Activated CD8-positive, alpha-beta T cell treated with anti-CD3 and anti-CD28 coated beads for 36 hours (primary cell): ENCODE measurements at regions of chr6 and their contacts with region 1.

Region 1: GRCh38 chr6:41941280-41942066 is at the start of gene CCND3:
- DNase-seq: peak; percentile 95
- ATAC-seq: peak; percentile 85
- H3K4me3 Mint-ChIP-seq: peak within 1 kb of the TSS; percentile 90
- H3K27ac Mint-ChIP-seq: peak within 1 kb of the TSS; percentile 91
- H3K4me1 Mint-ChIP-seq: peaks cover 51% of the 10 kb centered on the region
- H3K27me3 Mint-ChIP-seq: no peaks in the 10 kb centered on the region
- CTCF ChIP-seq: no peak
- total RNA-seq, gene CCND3: 457 to 459 TPM

Region 2: GRCh38 chr6:41901882-41902519 is 39.5 kb before region 1 on chr6:
- CTCF ChIA-PET with region 1: interaction called, 6 read pairs
- POLR2A ChIA-PET with region 1: no interaction called
- intact Hi-C with region 1: loop called (anchors 2 kb)
- DNase-seq: peak; percentile 71
- ATAC-seq: peak; percentile 68
- H3K4me3 Mint-ChIP-seq: no peak overlapping the region
- H3K27ac Mint-ChIP-seq: no peak overlapping the region
- H3K4me1 Mint-ChIP-seq: peaks cover 4% of the 10 kb centered on the region
- H3K27me3 Mint-ChIP-seq: no peaks in the 10 kb centered on the region
- CTCF ChIP-seq: peak; percentile 38

Region 3: DNA sequence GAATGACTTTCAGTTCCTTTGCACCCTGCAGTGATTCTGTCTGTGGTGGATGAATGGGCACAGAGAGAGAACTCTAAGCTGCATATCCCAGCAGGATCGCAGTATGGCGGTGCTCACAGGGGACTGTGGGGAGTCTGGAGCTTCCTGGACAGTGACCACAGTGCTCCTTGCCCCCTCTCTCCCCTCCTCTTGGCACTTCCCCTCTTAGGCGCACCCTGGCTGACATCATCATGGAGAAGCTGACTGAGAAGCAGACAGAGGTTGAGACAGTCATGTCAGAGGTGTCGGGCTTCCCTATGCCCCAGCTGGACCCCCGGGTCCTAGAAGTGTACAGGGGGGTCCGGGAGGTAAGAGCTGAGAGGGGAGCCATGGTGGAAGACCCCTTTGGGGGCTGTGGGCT is 11.5 kb before region 1 on chr6:
- CTCF ChIA-PET with region 1: interaction called, 115 read pairs
- POLR2A ChIA-PET with region 1: interaction called, 58 read pairs
- intact Hi-C with region 1: no loop called
- DNase-seq: no peak
- ATAC-seq: no peak
- H3K4me3 Mint-ChIP-seq: no peak overlapping the region
- H3K27ac Mint-ChIP-seq: peak overlapping the region; percentile 42
- H3K4me1 Mint-ChIP-seq: peaks cover 37% of the 10 kb centered on the region
- H3K27me3 Mint-ChIP-seq: no peaks in the 10 kb centered on the region
- CTCF ChIP-seq: no peak

Region 4: GRCh38 chr6:41966961-41967311 is 25.5 kb after region 1 on chr6:
- CTCF ChIA-PET with region 1: interaction called, 9 read pairs
- POLR2A ChIA-PET with region 1: interaction called, 10 read pairs
- intact Hi-C with region 1: no loop called
- DNase-seq: no peak
- ATAC-seq: no peak
- H3K4me3 Mint-ChIP-seq: no peak overlapping the region
- H3K27ac Mint-ChIP-seq: peak overlapping the region; percentile 92
- H3K4me1 Mint-ChIP-seq: peaks cover 82% of the 10 kb centered on the region
- H3K27me3 Mint-ChIP-seq: no peaks in the 10 kb centered on the region
- CTCF ChIP-seq: no peak

Region 5: GRCh38 chr6:42009966-42010891 is 68.8 kb after region 1 on chr6:
- CTCF ChIA-PET with region 1: interaction called, 4 read pairs
- POLR2A ChIA-PET with region 1: interaction called, 10 read pairs
- intact Hi-C with region 1: no loop called
- DNase-seq: peak; percentile 68
- ATAC-seq: peak; percentile 69
- H3K4me3 Mint-ChIP-seq: peak overlapping the region; percentile 74
- H3K27ac Mint-ChIP-seq: peak overlapping the region; percentile 94
- H3K4me1 Mint-ChIP-seq: peaks cover 76% of the 10 kb centered on the region
- H3K27me3 Mint-ChIP-seq: no peaks in the 10 kb centered on the region
- CTCF ChIP-seq: no peak

Region 6: DNA sequence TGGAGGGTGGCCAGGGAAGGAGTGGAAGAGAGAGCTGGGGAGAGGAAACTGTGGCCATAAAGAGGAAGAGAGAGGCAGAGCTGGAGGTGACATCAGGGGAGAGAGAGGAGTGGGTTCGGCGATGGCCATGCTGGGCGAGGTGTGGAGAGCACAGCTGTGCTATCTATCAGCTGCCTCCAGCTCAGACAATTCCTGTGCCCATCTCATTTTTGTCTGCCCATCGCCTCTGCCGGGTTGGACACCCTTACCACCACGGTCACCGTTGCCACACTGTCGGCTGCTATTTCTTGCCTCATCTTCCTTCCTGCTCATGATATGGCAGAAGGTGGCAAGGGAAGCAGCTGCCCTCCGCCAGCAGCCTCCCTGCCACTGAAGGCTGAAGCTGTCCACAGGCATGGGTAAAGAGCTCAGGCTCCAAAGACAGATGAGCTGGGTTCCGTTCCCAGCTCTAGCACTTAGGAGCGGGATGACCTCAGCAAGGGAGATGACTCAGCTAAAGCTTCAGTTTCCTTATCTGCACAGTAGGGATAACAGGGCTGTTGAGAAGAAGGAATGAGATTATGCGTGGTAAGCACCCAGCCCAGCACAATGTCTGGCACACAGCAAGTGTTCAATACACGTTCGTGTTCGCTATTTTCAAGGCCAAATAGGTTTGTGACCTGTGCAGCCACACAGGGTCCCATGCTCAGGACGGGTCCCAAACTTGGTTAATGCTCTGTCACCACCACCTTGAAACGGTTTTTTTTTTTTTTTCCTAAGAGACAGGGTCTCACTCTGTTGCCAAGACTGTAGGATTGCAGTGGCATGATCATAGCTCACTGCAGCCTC is 87.0 kb after region 1 on chr6:
- CTCF ChIA-PET with region 1: interaction called, 6 read pairs
- POLR2A ChIA-PET with region 1: interaction called, 19 read pairs
- intact Hi-C with region 1: loop called (anchors 5 kb)
- DNase-seq: no peak
- ATAC-seq: peak; percentile 16
- H3K4me3 Mint-ChIP-seq: peak overlapping the region; percentile 71
- H3K27ac Mint-ChIP-seq: peak overlapping the region; percentile 98
- H3K4me1 Mint-ChIP-seq: peaks cover 82% of the 10 kb centered on the region
- H3K27me3 Mint-ChIP-seq: no peaks in the 10 kb centered on the region
- CTCF ChIP-seq: no peak

Region 7: DNA sequence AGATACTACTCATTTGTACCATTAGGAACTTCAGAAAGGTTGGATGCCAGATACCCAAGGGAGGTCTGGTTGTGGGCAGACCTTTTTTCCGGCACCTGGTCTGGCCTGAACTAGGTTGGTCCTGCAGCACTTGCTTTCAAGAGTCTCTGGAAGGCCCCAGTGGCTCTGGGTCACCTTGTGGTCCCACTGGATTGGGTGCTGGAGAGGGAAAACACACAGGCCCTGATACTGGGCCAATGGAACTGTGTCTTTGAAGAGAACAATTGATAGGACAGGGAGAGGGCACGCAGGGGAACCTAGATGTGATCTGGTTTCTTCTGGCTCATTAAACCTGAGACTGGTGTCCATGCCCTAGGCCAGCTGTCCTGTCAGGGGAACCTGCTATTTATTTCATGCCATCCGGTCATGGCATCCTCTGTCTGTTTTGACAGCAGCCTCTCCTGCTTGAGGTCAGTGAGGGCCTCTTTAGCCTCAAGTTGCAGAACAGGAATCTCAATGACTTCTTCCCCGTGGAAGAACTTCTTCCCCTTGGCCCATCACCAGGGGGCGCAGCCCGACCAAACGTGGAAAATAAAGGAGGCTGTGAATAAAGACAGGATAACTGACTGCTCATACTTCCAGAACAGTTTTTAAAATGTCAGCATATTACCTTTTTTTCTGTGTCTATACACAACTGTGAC is 133.8 kb after region 1 on chr6:
- CTCF ChIA-PET with region 1: no interaction called
- POLR2A ChIA-PET with region 1: no interaction called
- intact Hi-C with region 1: no loop called
- DNase-seq: peak; percentile 73
- ATAC-seq: no peak
- H3K4me3 Mint-ChIP-seq: no peak overlapping the region
- H3K27ac Mint-ChIP-seq: no peak overlapping the region
- H3K4me1 Mint-ChIP-seq: no peaks in the 10 kb centered on the region
- H3K27me3 Mint-ChIP-seq: no peaks in the 10 kb centered on the region
- CTCF ChIP-seq: peak; percentile 73